Aorta (tissue), 5 donors: ENCODE measurements at regions of chr22 and their contacts with region 1.

Region 1: GRCh38 chr22:26511857-26512793 is at the start of gene TFIP11:
- DNase-seq: peak; percentile 96 to 99
- ATAC-seq: peak; percentile 96
- H3K4me3 ChIP-seq: peak within 1 kb of the TSS; percentile 45 to 79
- H3K27ac ChIP-seq: peak within 1 kb of the TSS; percentile 33
- H3K4me1 ChIP-seq: peaks cover 0 to 4% of the 10 kb centered on the region in 2 donors
- H3K27me3 ChIP-seq: no peaks in the 10 kb centered on the region
- total RNA-seq, gene TFIP11: 24.7 to 27.7 TPM

Region 2: GRCh38 chr22:26452236-26453016 is 59.7 kb before region 1 on chr22:
- intact Hi-C with region 1: no loop called
- DNase-seq: no peak
- ATAC-seq: no peak
- H3K4me3 ChIP-seq: no peak overlapping the region
- H3K27ac ChIP-seq: no peak overlapping the region
- H3K4me1 ChIP-seq: no peaks in the 10 kb centered on the region
- H3K27me3 ChIP-seq: no peaks in the 10 kb centered on the region

Region 3: DNA sequence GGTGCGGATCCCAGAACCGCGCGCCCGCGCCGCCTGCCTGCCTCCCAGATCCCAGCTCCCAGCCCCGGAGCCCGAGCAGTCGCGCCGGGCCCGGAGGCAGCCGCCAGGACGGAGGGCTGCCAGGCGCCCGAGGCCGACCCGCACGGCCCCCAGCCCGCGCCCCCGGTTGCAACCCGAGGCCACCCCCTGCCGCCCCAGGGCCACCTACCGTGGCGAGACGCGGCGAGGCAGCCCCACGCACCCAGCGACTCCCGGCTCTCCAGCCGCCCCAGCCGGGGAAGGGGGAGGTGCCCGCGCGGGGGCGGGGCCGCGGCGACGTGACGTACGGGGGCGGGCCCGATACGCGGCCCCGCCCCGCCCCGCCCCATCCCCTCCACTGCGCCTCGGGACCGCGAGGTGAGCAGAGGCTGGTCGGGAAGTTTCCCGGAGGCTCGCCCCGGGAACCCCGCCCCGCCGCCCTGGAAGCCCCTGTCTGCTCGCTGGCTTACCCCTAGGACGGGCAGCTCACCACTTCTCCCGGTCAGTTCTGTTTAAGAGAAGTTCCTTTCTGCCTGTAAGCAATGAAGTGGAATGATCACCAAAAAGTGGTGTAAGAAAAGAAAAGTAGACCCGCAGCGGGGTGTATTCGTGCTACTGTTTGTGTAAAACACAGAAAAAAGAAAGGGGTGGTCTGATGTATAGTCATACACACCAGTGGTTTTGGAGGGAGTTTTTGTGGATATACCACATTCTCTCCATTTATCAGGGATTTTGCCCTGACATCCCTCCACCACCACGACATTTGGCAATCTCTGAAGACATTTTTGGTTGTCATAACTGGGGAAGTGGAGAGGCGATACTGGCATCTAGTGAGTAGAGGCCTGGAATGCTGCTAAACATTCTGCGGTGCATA is 78.0 kb after region 1 on chr22 and contains the start of gene TPST2:
- intact Hi-C with region 1: loop called (anchors 2 kb)
- DNase-seq: peak; percentile 80 to 91
- ATAC-seq: peak; percentile 93
- H3K4me3 ChIP-seq: peak within 1 kb of the TSS; percentile 59 to 98
- H3K27ac ChIP-seq: no peak within 1 kb of the TSS
- H3K4me1 ChIP-seq: no peaks in the 10 kb centered on the region
- H3K27me3 ChIP-seq: no peaks in the 10 kb centered on the region
- total RNA-seq, gene TPST2: 26.0 to 26.7 TPM